PC-3 (cell line): ENCODE measurements at regions of chr7 and their contacts with region 1.

Region 1: DNA sequence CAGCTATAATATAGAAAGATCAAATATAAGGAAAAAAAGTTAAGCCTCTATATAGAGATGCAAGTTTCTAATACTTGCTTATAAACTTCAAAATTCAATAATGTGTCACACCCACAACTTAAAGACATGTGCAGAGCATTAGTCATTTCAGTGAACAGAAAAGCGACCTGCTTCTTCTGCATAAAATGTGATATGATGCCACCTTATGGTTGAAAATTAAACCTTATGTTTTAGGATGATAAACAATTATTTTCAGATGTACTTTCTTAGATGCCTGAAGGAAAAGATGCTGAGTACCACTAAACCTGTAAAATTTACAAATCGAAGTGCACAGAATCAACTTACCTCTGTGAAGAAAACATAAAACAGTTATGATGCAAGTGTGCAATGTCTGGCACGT is 96.0 kb downstream of the MTERF1 start:
- DNase-seq: peak; percentile 83
- ATAC-seq: peak; percentile 92
- H3K4me3 ChIP-seq: no peak overlapping the region
- H3K27ac ChIP-seq: no peak overlapping the region
- H3K4me1 ChIP-seq: 0 out of 2 replicates have a peak, but pooled peaks cover 5% of the 10 kb centered on the region
- H3K27me3 ChIP-seq: no peaks in the 10 kb centered on the region
- CTCF ChIP-seq: peak; percentile 77

Region 2: GRCh38 chr7:91082852-91083495 is 701.5 kb before region 1 on chr7:
- CTCF ChIA-PET with region 1: no interaction called
- POLR2A ChIA-PET with region 1: no interaction called
- intact Hi-C with region 1: loop called (anchors 1 kb)
- DNase-seq: peak; percentile 41
- ATAC-seq: peak; percentile 33; the same call in 1 of the 2 replicates
- H3K4me3 ChIP-seq: no peak overlapping the region
- H3K27ac ChIP-seq: no peak overlapping the region
- H3K4me1 ChIP-seq: no peaks in the 10 kb centered on the region
- H3K27me3 ChIP-seq: no peaks in the 10 kb centered on the region
- CTCF ChIP-seq: peak; percentile 69

Region 3: DNA sequence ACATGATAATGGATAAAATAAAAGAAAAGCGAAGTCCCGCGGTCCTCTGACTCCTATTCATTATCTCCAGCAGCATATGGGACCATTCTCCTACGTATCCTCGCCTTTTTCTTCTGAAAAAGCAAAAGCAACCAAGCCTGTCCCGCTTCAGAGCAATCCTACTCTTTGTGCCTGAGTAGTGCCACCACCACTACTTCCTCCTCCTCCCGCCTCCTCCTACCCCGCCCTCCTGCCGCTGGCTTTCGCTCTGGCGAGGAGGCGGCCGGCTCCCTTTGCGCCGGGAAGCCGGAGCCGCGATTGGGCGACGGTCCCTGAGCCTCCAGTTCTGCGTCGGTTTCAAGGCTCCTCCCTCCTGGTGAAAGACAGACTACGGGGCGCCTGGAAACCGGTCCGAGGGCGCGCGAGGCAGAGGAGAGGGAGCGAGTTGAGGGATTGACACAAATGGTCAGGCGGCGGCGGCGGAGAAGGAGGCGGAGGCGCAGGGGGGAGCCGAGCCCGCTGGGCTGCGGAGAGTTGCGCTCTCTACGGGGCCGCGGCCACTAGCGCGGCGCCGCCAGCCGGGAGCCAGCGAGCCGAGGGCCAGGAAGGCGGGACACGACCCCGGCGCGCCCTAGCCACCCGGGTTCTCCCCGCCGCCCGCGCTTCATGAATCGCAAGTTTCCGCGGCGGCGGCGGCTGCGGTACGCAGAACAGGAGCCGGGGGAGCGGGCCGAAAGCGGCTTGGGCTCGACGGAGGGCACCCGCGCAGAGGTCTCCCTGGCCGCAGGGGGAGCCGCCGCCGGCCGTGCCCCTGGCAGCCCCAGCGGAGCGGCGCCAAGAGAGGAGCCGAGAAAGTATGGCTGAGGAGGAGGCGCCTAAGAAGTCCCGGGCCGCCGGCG is 520.2 kb before region 1 on chr7 and contains the start of gene FZD1:
- CTCF ChIA-PET with region 1: no interaction called
- POLR2A ChIA-PET with region 1: no interaction called
- intact Hi-C with region 1: loop called (anchors 1 kb)
- DNase-seq: peak; percentile 95
- ATAC-seq: peak; percentile 78
- H3K4me3 ChIP-seq: peak within 1 kb of the TSS; percentile 78
- H3K27ac ChIP-seq: no peak within 1 kb of the TSS
- H3K4me1 ChIP-seq: peaks cover 10% of the 10 kb centered on the region
- H3K27me3 ChIP-seq: no peaks in the 10 kb centered on the region
- CTCF ChIP-seq: no peak
- total RNA-seq, gene FZD1: 2.7 and 3.1 TPM in 2 replicates

Region 4: GRCh38 chr7:91557789-91558392 is 226.6 kb before region 1 on chr7:
- CTCF ChIA-PET with region 1: no interaction called
- POLR2A ChIA-PET with region 1: no interaction called
- intact Hi-C with region 1: loop called (anchors 5 kb)
- DNase-seq: peak; percentile 98
- ATAC-seq: peak; percentile 97
- H3K4me3 ChIP-seq: no peak overlapping the region
- H3K27ac ChIP-seq: peak overlapping the region; percentile 83
- H3K4me1 ChIP-seq: peaks cover 16% of the 10 kb centered on the region
- H3K27me3 ChIP-seq: no peaks in the 10 kb centered on the region
- CTCF ChIP-seq: no peak

Region 5: GRCh38 chr7:91720260-91720937 is 64.1 kb before region 1 on chr7:
- CTCF ChIA-PET with region 1: no interaction called
- POLR2A ChIA-PET with region 1: no interaction called
- intact Hi-C with region 1: loop called (anchors 1 kb)
- DNase-seq: peak; percentile 92
- ATAC-seq: peak; percentile 93
- H3K4me3 ChIP-seq: 0 out of 2 replicates have a peak overlapping the region, but pooled peaks have one; percentile 10
- H3K27ac ChIP-seq: peak overlapping the region; percentile 87
- H3K4me1 ChIP-seq: peaks cover 25% of the 10 kb centered on the region
- H3K27me3 ChIP-seq: no peaks in the 10 kb centered on the region
- CTCF ChIP-seq: no peak